Esophagus muscularis mucosa (tissue), 4 donors: ENCODE measurements at regions of chr6 and their contacts with region 1.

Region 1: DNA sequence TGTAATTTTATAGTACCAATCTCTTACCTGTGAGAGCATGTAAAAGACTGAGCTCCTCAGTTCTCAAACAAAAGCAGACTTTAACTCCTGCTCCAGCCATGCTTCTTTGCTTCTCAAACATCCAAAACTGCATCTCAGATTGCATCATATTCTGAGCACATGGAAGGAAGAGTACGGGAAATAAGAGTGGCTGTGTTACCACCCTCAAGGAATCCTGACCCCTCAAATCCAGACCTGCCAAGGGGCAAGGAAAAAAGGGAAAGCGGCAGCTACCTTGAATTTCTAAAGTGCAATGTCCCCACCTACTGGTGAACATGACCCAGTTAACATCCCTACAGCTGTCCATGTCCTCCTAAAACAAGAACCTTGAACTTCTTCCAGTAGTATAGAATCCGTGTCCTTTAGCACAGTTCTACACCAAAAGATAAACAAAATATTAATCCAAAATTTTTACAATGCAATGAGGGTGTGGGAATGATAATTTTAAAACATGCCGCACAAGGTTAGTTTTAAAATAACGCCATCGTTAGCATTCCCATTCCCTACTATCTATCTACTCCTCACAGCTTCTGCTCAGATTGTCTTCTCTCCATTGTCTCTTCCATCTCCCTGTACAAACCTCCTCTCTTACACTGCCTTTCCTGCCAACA is 34.1 kb upstream of the HLA-DQB1 start:
- DNase-seq: no peak
- H3K4me3 ChIP-seq: no peak overlapping the region
- H3K27ac ChIP-seq: no peak overlapping the region
- H3K4me1 ChIP-seq: no peaks in the 10 kb centered on the region
- H3K27me3 ChIP-seq: peaks cover 0 to 49% (median 0%) of the 10 kb centered on the region in 4 donors
- CTCF ChIP-seq: peak; percentile 42 to 72 (median 69)
- EP300 ChIP-seq: no peak
- POLR2A ChIP-seq: no peak

Region 2: GRCh38 chr6:32432050-32432450 is 268.5 kb before region 1 on chr6:
- intact Hi-C with region 1: loop called (anchors 5 kb)
- DNase-seq: no peak
- H3K4me3 ChIP-seq: no peak overlapping the region
- H3K27ac ChIP-seq: no peak overlapping the region
- H3K4me1 ChIP-seq: no peaks in the 10 kb centered on the region
- H3K27me3 ChIP-seq: peaks cover 0 to 17% (median 0%) of the 10 kb centered on the region in 4 donors
- CTCF ChIP-seq: peak; percentile 28 to 47 (median 39)
- EP300 ChIP-seq: no peak
- POLR2A ChIP-seq: no peak

Region 3: GRCh38 chr6:32668226-32668747 is 32.2 kb before region 1 on chr6:
- intact Hi-C with region 1: no loop called
- DNase-seq: no peak
- H3K4me3 ChIP-seq: no peak overlapping the region
- H3K27ac ChIP-seq: peak overlapping the region in 2 of 4 donors; percentile 26 to 27
- H3K4me1 ChIP-seq: no peaks in the 10 kb centered on the region
- H3K27me3 ChIP-seq: peaks cover 0 to 6% (median 0%) of the 10 kb centered on the region in 4 donors
- CTCF ChIP-seq: no peak
- EP300 ChIP-seq: no peak
- POLR2A ChIP-seq: no peak

Region 4: GRCh38 chr6:32796848-32797776 is 96.6 kb after region 1 on chr6:
- intact Hi-C with region 1: loop called (anchors 10 kb)
- DNase-seq: peak; percentile 95
- H3K4me3 ChIP-seq: peak overlapping the region; percentile 5 to 39 (median 24)
- H3K27ac ChIP-seq: no peak overlapping the region
- H3K4me1 ChIP-seq: peaks cover 0 to 11% (median 9%) of the 10 kb centered on the region in 4 donors
- H3K27me3 ChIP-seq: peaks cover 0 to 74% (median 7%) of the 10 kb centered on the region in 4 donors
- CTCF ChIP-seq: peak; percentile 91 to 95 (median 94)
- EP300 ChIP-seq: no peak
- POLR2A ChIP-seq: no peak